MCF 10A (cell line): ENCODE measurements at regions of chr20 and their contacts with region 1.

Region 1: DNA sequence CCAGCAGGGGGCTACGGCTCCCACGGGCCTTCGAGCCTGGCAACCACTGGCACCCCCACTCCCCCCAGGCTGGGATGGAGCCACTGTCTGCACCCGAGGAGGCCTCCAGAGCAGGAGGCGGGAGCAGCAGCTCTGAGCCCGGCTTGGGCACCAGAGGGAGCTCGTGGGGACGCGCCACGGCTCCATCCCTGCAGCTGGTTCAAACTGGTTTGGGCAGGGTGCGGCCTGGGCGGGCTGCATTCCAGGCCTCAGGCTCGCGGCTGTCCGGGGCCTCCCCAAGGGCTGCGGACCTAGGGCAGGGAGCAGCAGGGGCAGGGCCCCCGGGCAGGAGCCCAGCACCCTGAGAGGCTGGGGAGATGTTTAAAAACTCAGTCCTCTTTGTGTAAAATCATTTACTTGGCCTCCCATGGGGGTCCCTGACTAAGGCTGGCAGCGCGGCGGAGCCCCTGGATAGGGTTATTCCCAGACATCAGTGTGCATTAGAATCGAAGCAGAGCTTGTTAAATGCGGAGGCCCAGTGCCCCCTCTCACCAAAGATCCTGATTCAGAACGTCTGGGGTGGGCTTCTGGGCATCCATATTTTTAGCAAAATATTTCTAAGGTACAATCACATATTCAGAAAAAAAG is 4.1 kb upstream of the BCAS4 start:
- DNase-seq: peak; percentile 85
- H3K4me3 Mint-ChIP-seq: no peak overlapping the region
- H3K27ac Mint-ChIP-seq: peak overlapping the region; percentile 69
- H3K4me1 Mint-ChIP-seq: peaks cover 6% of the 10 kb centered on the region
- H3K27me3 Mint-ChIP-seq: no peaks in the 10 kb centered on the region
- CTCF ChIP-seq: peak; percentile 70

Region 2: DNA sequence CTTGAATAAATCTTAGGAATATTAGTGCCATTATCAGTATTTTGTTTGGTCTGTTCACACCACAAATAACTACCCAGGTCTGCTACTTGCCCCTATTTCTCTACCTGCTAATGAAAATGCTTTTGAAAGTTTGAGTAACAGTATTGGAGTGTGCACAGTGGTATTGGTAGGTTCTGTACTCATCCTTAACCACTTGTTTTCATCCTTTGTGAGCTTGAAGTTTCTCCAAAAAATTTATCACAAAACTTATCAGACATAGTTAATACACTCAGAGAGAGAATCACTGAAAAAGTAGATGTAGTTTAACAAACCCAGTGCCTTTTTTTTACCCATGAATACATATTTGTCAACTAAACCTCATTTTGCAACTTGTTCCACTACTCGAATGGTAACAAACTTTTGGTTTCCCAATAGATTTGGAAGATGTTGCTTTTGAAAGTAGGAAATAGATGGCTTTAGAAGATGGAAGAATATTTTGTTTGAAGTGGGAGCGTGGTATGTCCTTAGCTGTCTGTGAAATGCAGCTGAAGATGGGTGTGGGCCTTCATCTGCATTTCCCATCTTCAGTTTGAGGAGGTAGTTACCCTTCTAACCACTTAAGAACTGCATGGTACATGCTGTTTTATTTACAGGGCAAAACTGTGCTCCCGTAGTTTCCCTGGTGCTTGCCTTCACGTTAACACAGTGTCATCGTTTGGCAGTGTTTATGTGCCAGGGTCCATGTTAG is 271.6 kb before region 1 on chr20:
- CTCF ChIA-PET with region 1: no interaction called
- POLR2A ChIA-PET with region 1: no interaction called
- intact Hi-C with region 1: no loop called
- DNase-seq: no peak
- H3K4me3 Mint-ChIP-seq: no peak overlapping the region
- H3K27ac Mint-ChIP-seq: peak overlapping the region; percentile 46
- H3K4me1 Mint-ChIP-seq: peaks cover 51% of the 10 kb centered on the region
- H3K27me3 Mint-ChIP-seq: no peaks in the 10 kb centered on the region
- CTCF ChIP-seq: no peak

Region 3: DNA sequence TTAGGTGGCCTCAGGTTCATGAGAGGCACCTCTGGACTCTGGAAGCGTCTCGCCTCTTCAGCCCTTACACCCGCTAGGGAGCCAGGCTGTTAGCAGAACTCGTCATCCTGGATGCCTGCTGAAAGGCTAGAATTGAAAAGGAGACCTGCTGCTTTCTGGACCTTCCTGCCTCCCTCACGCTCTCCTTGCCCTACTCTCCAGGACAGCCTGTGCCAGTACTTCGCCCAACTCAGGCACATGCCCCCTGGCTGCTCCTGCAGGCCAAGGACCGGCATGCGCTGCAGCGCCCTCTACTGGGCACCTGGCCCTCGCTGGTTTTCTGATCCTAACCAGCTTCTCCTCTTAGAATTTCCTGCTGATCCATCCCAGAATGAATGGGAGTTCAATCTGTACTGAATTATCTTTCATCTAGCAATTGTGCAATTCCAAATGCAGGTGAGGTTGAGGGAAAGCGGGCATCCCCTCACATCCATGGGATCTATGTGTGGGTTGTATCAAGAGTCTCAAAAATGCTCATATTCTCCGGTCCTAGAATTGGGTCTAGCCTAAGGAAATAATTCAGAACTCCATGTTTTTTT is 202.6 kb before region 1 on chr20:
- CTCF ChIA-PET with region 1: interaction called, 10 read pairs
- POLR2A ChIA-PET with region 1: interaction called, 4 read pairs
- intact Hi-C with region 1: no loop called
- DNase-seq: peak; percentile 81
- H3K4me3 Mint-ChIP-seq: peak overlapping the region; percentile 17
- H3K27ac Mint-ChIP-seq: peak overlapping the region; percentile 83
- H3K4me1 Mint-ChIP-seq: peaks cover 16% of the 10 kb centered on the region
- H3K27me3 Mint-ChIP-seq: no peaks in the 10 kb centered on the region
- CTCF ChIP-seq: peak; percentile 96

Region 4: GRCh38 chr20:50750145-50750671 is 40.6 kb before region 1 on chr20:
- CTCF ChIA-PET with region 1: interaction called, 126 read pairs
- POLR2A ChIA-PET with region 1: interaction called, 4 read pairs
- intact Hi-C with region 1: loop called (anchors 2 kb)
- DNase-seq: no peak
- H3K4me3 Mint-ChIP-seq: no peak overlapping the region
- H3K27ac Mint-ChIP-seq: no peak overlapping the region
- H3K4me1 Mint-ChIP-seq: no peaks in the 10 kb centered on the region
- H3K27me3 Mint-ChIP-seq: no peaks in the 10 kb centered on the region
- CTCF ChIP-seq: no peak

Region 5: DNA sequence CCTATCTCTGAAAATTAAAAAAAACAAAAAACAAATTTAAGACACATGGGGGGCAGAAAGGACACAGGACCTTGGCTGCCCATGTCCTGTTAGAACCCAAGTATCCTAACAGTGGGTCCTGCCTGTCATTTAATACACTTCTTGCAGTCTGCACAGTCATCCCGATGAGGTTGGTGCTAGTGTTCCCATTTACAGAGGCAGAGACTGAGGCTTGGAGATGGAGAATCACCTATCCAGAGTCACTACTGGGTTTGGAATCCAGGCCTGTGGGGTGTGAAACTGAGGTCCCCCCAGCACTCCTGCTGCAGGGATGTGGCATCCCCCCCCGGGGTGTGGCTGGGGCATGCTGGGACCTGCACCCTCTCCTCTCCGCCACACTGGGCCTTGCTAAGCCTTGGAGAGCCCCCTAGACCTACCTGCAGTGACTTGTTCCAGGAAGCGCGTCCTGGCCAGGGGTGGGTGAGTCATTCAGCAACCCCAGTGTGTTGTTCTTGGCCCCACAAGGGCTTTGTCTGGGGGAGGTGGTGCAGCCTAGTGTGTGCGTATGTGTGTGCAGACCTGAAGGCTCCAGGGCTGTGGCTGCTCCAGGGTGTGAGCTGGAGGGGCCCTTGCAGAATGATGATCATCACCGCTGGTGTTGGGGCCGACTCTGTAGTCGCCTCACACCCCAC is 53.8 kb after region 1 on chr20:
- CTCF ChIA-PET with region 1: interaction called, 32 read pairs
- POLR2A ChIA-PET with region 1: interaction called, 17 read pairs
- intact Hi-C with region 1: no loop called
- DNase-seq: peak; percentile 98
- H3K4me3 Mint-ChIP-seq: no peak overlapping the region
- H3K27ac Mint-ChIP-seq: peak overlapping the region; percentile 16
- H3K4me1 Mint-ChIP-seq: peaks cover 36% of the 10 kb centered on the region
- H3K27me3 Mint-ChIP-seq: no peaks in the 10 kb centered on the region
- CTCF ChIP-seq: no peak

Region 6: GRCh38 chr20:50929299-50930138 is 138.8 kb after region 1 on chr20:
- CTCF ChIA-PET with region 1: interaction called, 256 read pairs
- POLR2A ChIA-PET with region 1: interaction called, 37 read pairs
- intact Hi-C with region 1: loop called (anchors 1 kb)
- DNase-seq: peak; percentile 96
- H3K4me3 Mint-ChIP-seq: peak overlapping the region; percentile 90
- H3K27ac Mint-ChIP-seq: peak overlapping the region; percentile 73
- H3K4me1 Mint-ChIP-seq: peaks cover 37% of the 10 kb centered on the region
- H3K27me3 Mint-ChIP-seq: no peaks in the 10 kb centered on the region
- CTCF ChIP-seq: peak; percentile 90

Region 7: GRCh38 chr20:50980851-50981713 is 190.3 kb after region 1 on chr20:
- CTCF ChIA-PET with region 1: interaction called, 21 read pairs
- POLR2A ChIA-PET with region 1: interaction called, 4 read pairs
- intact Hi-C with region 1: loop called (anchors 2 kb)
- DNase-seq: peak; percentile 80
- H3K4me3 Mint-ChIP-seq: no peak overlapping the region
- H3K27ac Mint-ChIP-seq: peak overlapping the region; percentile 97
- H3K4me1 Mint-ChIP-seq: peaks cover 34% of the 10 kb centered on the region
- H3K27me3 Mint-ChIP-seq: no peaks in the 10 kb centered on the region
- CTCF ChIP-seq: peak; percentile 75